SK-N-SH (cell line): ENCODE measurements at regions of chr11 and their contacts with region 1.

Region 1: GRCh38 chr11:61899146-61899841 is 7.9 kb upstream of the FADS3 start:
- DNase-seq: peak; percentile 97
- H3K4me3 ChIP-seq: peak overlapping the region in 1 of 2 experiments; percentile 44; a peak in 1 of 4 replicates
- H3K27ac ChIP-seq: no peak overlapping the region
- H3K4me1 ChIP-seq: no peaks in the 10 kb centered on the region
- H3K27me3 ChIP-seq: no peaks in the 10 kb centered on the region
- CTCF ChIP-seq: peak; percentile 98
- EP300 ChIP-seq: no peak
- RAD21 ChIP-seq: peak; percentile 89

Region 2: DNA sequence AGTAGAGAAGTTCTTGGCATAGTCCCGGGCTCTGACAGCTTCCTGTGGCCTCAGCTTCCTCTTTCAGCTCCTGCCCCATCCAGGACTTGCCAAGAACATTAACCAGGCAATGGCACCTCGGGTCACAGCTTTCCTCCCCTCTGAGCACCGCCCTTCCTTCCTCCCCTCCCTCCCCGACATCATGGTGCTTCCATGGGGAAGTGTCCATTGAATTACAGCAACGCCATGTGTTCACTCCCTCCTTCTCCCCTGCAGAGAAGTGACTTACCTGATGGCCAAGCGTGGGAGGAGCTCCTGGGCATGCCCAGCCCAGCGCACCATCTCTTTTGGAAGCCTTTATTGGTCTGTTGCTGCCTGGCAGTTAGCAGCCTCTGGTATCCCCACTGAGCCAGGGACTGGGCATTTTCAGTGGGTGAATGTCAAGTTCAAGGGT is 244.9 kb before region 1 on chr11:
- CTCF ChIA-PET with region 1: no interaction called
- POLR2A ChIA-PET with region 1: no interaction called
- DNase-seq: no peak
- H3K4me3 ChIP-seq: no peak overlapping the region
- H3K27ac ChIP-seq: no peak overlapping the region
- H3K4me1 ChIP-seq: no peaks in the 10 kb centered on the region
- H3K27me3 ChIP-seq: no peaks in the 10 kb centered on the region; the same call in 1 of the 2 replicates
- CTCF ChIP-seq: no peak
- EP300 ChIP-seq: no peak
- RAD21 ChIP-seq: no peak

Region 3: GRCh38 chr11:61792310-61793085 is 106.8 kb before region 1 on chr11 and contains the starts of genes FEN1 and TMEM258:
- CTCF ChIA-PET with region 1: interaction called, 62 read pairs
- POLR2A ChIA-PET with region 1: interaction called, 3 read pairs
- DNase-seq: peak; percentile 88
- H3K4me3 ChIP-seq: peak within 1 kb of the TSS; percentile 95 to 98
- H3K27ac ChIP-seq: peak within 1 kb of the TSS; percentile 99 to 100
- H3K4me1 ChIP-seq: peaks cover 5 to 19% of the 10 kb centered on the region in 2 experiments; a peak in 3 of 4 replicates
- H3K27me3 ChIP-seq: no peaks in the 10 kb centered on the region
- CTCF ChIP-seq: no peak
- EP300 ChIP-seq: no peak
- RAD21 ChIP-seq: no peak
- polyA plus RNA-seq, gene FEN1: 35.9 and 39.5 TPM in 2 replicates
- polyA plus RNA-seq, gene TMEM258: 454 and 617 TPM in 2 replicates

Region 4: GRCh38 chr11:61871158-61871597 is 28.1 kb before region 1 on chr11:
- CTCF ChIA-PET with region 1: interaction called, 91 read pairs
- POLR2A ChIA-PET with region 1: no interaction called
- DNase-seq: peak; percentile 94
- H3K4me3 ChIP-seq: peak overlapping the region; percentile 12 to 17; a peak in 2 of 4 replicates
- H3K27ac ChIP-seq: no peak overlapping the region
- H3K4me1 ChIP-seq: peaks cover 0 to 13% of the 10 kb centered on the region in 2 experiments; a peak in 2 of 4 replicates
- H3K27me3 ChIP-seq: no peaks in the 10 kb centered on the region
- CTCF ChIP-seq: peak; percentile 89
- EP300 ChIP-seq: no peak
- RAD21 ChIP-seq: peak; percentile 88

Region 5: GRCh38 chr11:61917341-61918109 is 18.2 kb after region 1 on chr11 and contains the start of gene RAB3IL1:
- CTCF ChIA-PET with region 1: interaction called, 106 read pairs
- POLR2A ChIA-PET with region 1: interaction called, 3 read pairs
- DNase-seq: peak; percentile 94
- H3K4me3 ChIP-seq: peak within 1 kb of the TSS; percentile 59 to 65
- H3K27ac ChIP-seq: no peak within 1 kb of the TSS; a peak in 1 of 4 replicates
- H3K4me1 ChIP-seq: peaks cover 5 to 31% of the 10 kb centered on the region in 2 experiments; a peak in 3 of 4 replicates
- H3K27me3 ChIP-seq: no peaks in the 10 kb centered on the region
- CTCF ChIP-seq: no peak
- EP300 ChIP-seq: no peak
- RAD21 ChIP-seq: no peak
- polyA plus RNA-seq, gene RAB3IL1: 9.8 and 10.2 TPM in 2 replicates

Region 6: DNA sequence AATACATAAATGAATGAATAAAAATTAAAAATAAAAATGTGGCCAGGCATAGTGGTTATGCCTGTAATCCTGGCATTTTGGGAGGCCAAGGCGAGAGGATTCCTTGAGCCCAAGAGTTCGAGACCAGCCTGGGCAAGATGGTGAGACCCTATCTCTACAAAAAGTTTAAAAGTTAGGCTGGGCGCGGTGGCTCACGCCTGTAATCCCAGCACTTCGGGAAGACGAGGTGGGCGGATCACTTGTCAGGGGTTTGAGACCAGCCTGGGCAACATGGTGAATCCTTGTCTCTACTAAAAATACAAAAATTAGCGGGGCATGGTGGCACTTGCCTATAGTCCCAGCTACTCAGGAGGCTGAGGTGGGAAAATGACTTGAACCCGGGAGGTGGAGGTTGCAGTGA is 41.2 kb after region 1 on chr11:
- CTCF ChIA-PET with region 1: interaction called, 543 read pairs
- POLR2A ChIA-PET with region 1: no interaction called
- DNase-seq: no peak
- H3K4me3 ChIP-seq: no peak overlapping the region
- H3K27ac ChIP-seq: no peak overlapping the region
- H3K4me1 ChIP-seq: no peaks in the 10 kb centered on the region
- H3K27me3 ChIP-seq: no peaks in the 10 kb centered on the region
- CTCF ChIP-seq: no peak
- EP300 ChIP-seq: no peak
- RAD21 ChIP-seq: no peak

Region 7: DNA sequence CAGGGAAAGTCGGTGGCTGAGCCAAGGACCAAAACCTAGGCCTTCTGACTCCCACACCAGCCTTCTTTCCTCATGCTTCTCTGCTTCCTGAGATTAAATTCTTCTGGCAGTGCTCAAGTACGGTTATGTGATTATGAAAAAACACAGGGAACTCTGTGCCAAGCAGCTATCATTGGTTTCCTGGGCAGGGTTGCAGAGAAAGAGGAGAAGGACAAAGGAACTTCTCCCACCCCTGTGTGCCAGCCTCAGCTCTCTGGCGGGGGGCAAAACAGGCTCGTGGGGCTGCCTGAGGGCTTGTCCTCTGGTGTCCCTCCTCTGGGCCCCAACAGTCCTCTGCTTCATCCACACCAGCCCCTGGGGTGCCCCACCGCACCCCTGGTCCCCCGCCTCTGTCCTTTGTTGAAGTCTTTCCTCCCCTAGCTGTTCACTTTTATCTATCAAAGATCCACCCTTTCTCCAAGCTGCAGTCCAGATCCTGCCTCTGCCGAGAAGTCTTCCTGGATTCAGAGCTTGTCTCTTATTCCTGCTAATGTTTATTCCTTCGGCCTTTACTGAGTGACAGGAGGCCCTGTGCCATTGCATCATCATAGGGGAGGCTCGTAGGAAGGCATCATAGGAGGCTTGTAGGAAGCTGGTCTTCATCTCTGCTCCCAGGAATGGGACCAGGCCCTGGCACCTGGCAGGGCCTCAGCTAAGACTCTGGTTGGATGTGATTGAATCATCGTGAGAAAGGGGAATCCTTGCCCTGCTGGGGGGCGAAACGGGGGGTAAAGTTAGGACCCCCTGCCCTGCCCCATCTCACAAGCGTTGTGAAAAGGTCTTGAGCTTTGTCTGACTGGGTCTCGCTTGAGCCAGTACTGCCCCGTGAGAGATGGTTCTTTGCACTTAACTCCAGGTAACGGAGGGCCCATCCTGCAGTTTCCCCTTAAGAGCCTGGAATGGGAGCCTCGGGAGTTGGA is 79.7 kb after region 1 on chr11:
- CTCF ChIA-PET with region 1: interaction called, 15 read pairs
- POLR2A ChIA-PET with region 1: no interaction called
- DNase-seq: no peak
- H3K4me3 ChIP-seq: no peak overlapping the region
- H3K27ac ChIP-seq: peak overlapping the region; percentile 40 to 63
- H3K4me1 ChIP-seq: peaks cover 7 to 14% of the 10 kb centered on the region in 2 experiments; a peak in 3 of 4 replicates
- H3K27me3 ChIP-seq: no peaks in the 10 kb centered on the region
- CTCF ChIP-seq: no peak
- EP300 ChIP-seq: no peak
- RAD21 ChIP-seq: no peak